ENCODE measurements at regions of chr9 and their contacts with region 1.

Region 1: GRCh38 chr9:105414947-105415661 is 32.7 kb upstream of the FSD1L start:
- DNase-seq: peak; percentile 71
- ATAC-seq: peak; percentile 60

Region 2: GRCh38 chr9:104863180-104863883 is 551.8 kb before region 1 on chr9:
- intact Hi-C with region 1: loop called (anchors 10 kb)
- DNase-seq: no peak
- ATAC-seq: peak; percentile 58

Region 3: DNA sequence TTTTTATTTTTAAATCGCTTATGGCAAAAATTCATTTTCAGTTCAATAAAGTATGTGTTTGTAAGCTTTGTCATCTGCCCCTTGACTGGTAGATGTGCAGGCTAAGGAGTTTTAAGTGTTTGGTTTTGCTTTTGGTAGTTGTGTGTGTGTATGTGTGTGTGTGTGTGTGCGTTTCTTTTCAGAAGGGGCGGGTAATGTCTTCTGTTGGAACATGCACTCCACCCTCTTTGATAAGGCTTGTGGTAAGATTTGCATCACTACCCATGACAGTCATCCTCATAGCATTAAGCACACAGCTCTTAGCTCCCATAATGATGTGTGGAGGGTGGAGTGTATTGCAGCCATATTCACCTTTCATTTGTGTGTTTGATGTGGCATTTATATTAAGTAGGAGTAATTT is 59.3 kb before region 1 on chr9:
- intact Hi-C with region 1: no loop called
- DNase-seq: no peak
- ATAC-seq: no peak

Region 4: DNA sequence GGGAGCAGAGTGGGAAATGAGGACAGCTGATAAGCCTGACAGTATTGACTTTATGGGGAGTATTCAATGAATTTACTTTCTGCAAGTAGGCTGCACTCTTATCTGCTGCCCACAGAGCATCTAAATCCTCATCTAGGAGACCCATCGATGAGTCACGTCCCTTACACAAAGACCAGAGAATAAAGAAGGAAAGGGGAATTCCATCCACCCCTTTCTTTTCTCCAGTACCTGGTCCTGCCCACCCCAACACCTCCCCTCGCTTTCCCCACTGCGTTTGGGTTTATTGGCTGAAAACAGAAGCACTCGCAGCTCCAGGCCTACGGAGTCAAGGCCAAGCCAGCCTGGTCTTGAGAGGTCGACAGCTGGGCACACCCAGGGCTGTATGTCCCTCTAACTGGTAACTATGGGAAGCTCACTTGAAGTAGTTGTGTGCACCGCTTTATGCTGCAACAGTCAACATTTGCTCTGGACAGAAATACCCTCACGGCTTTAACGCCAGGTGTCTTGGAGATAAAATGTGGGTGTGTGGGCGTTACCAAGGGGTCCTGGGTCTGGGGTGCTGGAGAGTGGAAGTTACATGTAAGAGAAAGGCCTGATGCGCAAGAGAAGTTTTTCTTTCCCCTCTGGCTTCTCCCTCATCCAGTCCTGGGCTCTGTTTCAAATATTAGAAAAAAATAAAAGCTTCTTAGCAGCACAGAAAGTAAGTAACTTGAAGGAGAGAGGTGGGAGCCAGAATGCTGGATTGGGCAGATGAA is 232.7 kb after region 1 on chr9:
- intact Hi-C with region 1: no loop called
- DNase-seq: no peak
- ATAC-seq: no peak